GM12878 (cell line): ENCODE measurements at regions of chr2 and their contacts with region 1.

Region 1: GRCh38 chr2:64750817-64751285 is 97.1 kb upstream of the SERTAD2 start:
- DNase-seq: peak; percentile 99
- ATAC-seq: peak; percentile 89
- H3K4me3 ChIP-seq: peak overlapping the region; percentile 98
- H3K27ac ChIP-seq: peak overlapping the region; percentile 92
- H3K4me1 ChIP-seq: 0 out of 2 replicates have a peak, but pooled peaks cover 3% of the 10 kb centered on the region
- H3K27me3 ChIP-seq: no peaks in the 10 kb centered on the region
- CTCF ChIP-seq: no peak; a peak in 2 of 6 replicates
- EP300 ChIP-seq: no peak; a peak in 1 of 4 replicates
- POLR2A ChIP-seq: peak; percentile 92
- RAD21 ChIP-seq: peak; percentile 31; the same call in 1 of the 2 replicates

Region 2: GRCh38 chr2:64625299-64626145 is 125.3 kb before region 1 on chr2:
- CTCF ChIA-PET with region 1: no interaction called
- POLR2A ChIA-PET with region 1: no interaction called
- RAD21 ChIA-PET with region 1: no interaction called
- SMC1A ChIA-PET with region 1: no interaction called
- in situ Hi-C with region 1: no loop called
- intact Hi-C with region 1: no loop called
- DNase-seq: no peak
- ATAC-seq: peak; percentile 71
- H3K4me3 ChIP-seq: no peak overlapping the region
- H3K27ac ChIP-seq: no peak overlapping the region
- H3K4me1 ChIP-seq: peaks cover 8% of the 10 kb centered on the region
- H3K27me3 ChIP-seq: no peaks in the 10 kb centered on the region
- CTCF ChIP-seq: 0 out of 6 replicates have a peak, but pooled peaks of 2 of the 3 experiments have one; percentile 12 to 15
- EP300 ChIP-seq: no peak
- POLR2A ChIP-seq: no peak
- RAD21 ChIP-seq: peak; percentile 54

Region 3: DNA sequence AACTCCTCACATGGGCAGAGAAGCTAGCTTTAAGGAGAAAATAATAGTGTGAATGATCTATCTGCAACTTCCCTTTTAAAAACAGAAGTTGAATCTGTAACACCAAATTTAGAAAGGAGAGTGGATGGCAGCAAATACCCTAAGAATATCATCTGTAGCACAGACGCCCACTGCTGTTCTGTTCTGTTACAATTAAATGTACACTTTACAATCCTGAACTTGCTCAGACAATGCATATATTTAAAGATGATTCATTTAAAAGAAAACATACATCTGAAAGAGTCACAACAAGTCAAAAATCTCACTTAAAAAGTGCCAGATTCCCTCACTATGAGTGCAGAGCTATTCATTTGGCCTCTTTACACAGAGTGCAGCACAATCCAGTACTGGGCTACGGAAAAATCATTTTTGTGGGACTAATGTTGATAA is 89.1 kb before region 1 on chr2:
- CTCF ChIA-PET with region 1: interaction called, 153 read pairs
- POLR2A ChIA-PET with region 1: interaction called, 195 read pairs
- RAD21 ChIA-PET with region 1: interaction called, 6 read pairs
- SMC1A ChIA-PET with region 1: interaction called, 945 read pairs
- in situ Hi-C with region 1: no loop called
- intact Hi-C with region 1: no loop called
- DNase-seq: no peak
- ATAC-seq: peak; percentile 81
- H3K4me3 ChIP-seq: no peak overlapping the region
- H3K27ac ChIP-seq: peak overlapping the region; percentile 56; the same call in 1 of the 2 replicates
- H3K4me1 ChIP-seq: peaks cover 40% of the 10 kb centered on the region
- H3K27me3 ChIP-seq: no peaks in the 10 kb centered on the region
- CTCF ChIP-seq: peak in 1 of 3 experiments; percentile 23; a peak in 1 of 6 replicates
- EP300 ChIP-seq: peak in 1 of 2 experiments; percentile 33; a peak in 1 of 4 replicates
- POLR2A ChIP-seq: no peak
- RAD21 ChIP-seq: no peak

Region 4: DNA sequence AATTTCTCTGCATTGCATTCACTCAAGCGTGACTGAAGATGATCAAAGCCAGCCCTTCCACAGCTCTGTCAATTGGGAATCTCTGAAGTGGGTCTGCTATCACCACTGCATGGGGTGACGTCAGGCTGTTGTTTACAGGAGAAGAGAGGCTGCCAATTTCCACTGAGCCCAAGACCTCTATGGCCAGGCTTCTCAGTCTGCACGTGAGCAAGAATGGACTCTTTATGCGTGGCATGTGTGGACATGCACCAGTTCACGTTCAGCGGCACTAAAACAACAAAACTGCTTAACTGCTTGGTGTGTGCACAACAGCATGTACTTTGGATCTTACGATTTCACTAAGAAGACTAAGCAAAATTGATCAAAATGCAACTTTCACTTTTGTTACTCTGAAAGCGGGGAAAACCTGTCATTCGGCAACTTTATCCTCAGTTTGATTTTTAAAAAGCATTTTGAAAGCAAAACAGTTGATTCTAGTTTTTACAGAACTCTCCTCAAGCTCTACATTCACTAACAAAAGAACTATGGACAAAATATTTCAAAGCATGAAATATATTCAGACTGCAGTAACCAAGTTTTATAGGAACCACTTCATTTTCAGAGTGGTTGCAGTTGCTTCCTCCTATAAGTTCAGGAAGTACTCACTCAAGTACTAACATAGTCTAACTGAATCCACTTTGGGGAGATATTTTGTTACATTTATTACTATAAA is 20.1 kb before region 1 on chr2:
- CTCF ChIA-PET with region 1: interaction called, 55 read pairs
- POLR2A ChIA-PET with region 1: interaction called, 115 read pairs
- RAD21 ChIA-PET with region 1: interaction called, 216 read pairs
- SMC1A ChIA-PET with region 1: interaction called, 439 read pairs
- in situ Hi-C with region 1: no loop called
- intact Hi-C with region 1: loop called (anchors 1 kb)
- DNase-seq: peak; percentile 69
- ATAC-seq: peak; percentile 39
- H3K4me3 ChIP-seq: peak overlapping the region; percentile 58
- H3K27ac ChIP-seq: peak overlapping the region; percentile 83
- H3K4me1 ChIP-seq: peaks cover 48% of the 10 kb centered on the region
- H3K27me3 ChIP-seq: no peaks in the 10 kb centered on the region
- CTCF ChIP-seq: no peak
- EP300 ChIP-seq: no peak
- POLR2A ChIP-seq: no peak
- RAD21 ChIP-seq: no peak

Region 5: DNA sequence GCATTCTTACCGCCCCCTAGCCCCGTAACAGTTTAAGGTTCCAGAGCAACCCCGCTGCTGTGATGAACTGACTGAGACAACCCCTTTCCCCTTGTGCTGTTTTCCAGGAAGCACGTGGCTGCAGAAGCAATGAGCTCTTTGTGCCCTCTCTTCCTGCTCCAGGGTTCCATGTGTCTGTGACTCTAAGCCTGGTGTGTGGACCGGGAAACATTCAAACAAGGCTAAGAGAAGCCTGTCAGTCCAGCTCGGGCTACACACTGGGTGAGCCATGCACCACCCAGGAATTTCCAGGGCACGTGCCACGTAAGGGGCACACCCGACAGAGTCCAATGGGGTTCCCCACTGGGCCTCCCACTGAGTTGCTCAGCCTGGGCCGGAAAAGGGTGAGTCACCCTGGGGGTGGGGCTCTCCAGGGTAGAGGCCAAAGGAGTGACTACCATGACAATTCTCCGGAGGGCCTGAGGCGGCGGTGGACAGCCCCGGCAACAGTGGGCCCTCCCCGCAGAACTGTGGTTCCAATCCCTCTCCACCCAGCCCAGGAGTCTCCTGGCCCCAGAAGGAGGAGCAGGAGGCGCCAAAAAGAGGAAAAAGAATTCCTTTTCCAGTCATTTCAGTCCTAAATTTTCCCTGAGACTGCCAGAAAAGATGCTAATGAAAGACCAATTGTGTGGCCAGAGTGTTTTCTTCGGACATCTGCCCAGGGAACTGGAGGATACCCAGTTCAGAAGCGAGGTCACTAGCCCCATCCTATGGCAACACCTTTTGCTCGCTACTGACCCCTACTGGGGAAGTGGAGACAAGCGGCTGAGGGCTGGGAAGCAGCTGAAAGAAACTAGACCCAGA is 80.5 kb after region 1 on chr2:
- CTCF ChIA-PET with region 1: interaction called, 13 read pairs
- POLR2A ChIA-PET with region 1: interaction called, 17 read pairs
- RAD21 ChIA-PET with region 1: interaction called, 47 read pairs
- SMC1A ChIA-PET with region 1: interaction called, 10 read pairs
- in situ Hi-C with region 1: no loop called
- intact Hi-C with region 1: loop called (anchors 2 kb)
- DNase-seq: peak; percentile 71
- ATAC-seq: peak; percentile 96
- H3K4me3 ChIP-seq: peak overlapping the region; percentile 19; the same call in 1 of the 2 replicates
- H3K27ac ChIP-seq: peak overlapping the region; percentile 80
- H3K4me1 ChIP-seq: peaks cover 12% of the 10 kb centered on the region
- H3K27me3 ChIP-seq: no peaks in the 10 kb centered on the region
- CTCF ChIP-seq: peak; percentile 80 to 99 (median 98)
- EP300 ChIP-seq: 0 out of 4 replicates have a peak, but pooled peaks of 1 of the 2 experiments have one; percentile 10
- POLR2A ChIP-seq: no peak; the same call in none of the 2 replicates
- RAD21 ChIP-seq: peak; percentile 85

Region 6: GRCh38 chr2:64932371-64933216 is 181.7 kb after region 1 on chr2:
- CTCF ChIA-PET with region 1: no interaction called
- POLR2A ChIA-PET with region 1: interaction called, 3 read pairs
- RAD21 ChIA-PET with region 1: interaction called, 3 read pairs
- SMC1A ChIA-PET with region 1: no interaction called
- in situ Hi-C with region 1: no loop called
- intact Hi-C with region 1: loop called (anchors 5 kb)
- DNase-seq: peak; percentile 98
- ATAC-seq: peak; percentile 81
- H3K4me3 ChIP-seq: peak overlapping the region; percentile 96
- H3K27ac ChIP-seq: peak overlapping the region; percentile 95
- H3K4me1 ChIP-seq: peaks cover 28% of the 10 kb centered on the region
- H3K27me3 ChIP-seq: no peaks in the 10 kb centered on the region
- CTCF ChIP-seq: no peak
- EP300 ChIP-seq: peak; percentile 62 to 83; a peak in 3 of 4 replicates
- POLR2A ChIP-seq: peak; percentile 84
- RAD21 ChIP-seq: 0 out of 2 replicates have a peak, but pooled peaks have one; percentile 1